ENCODE measurements at regions of chr4 and their contacts with region 1.

Region 1: DNA sequence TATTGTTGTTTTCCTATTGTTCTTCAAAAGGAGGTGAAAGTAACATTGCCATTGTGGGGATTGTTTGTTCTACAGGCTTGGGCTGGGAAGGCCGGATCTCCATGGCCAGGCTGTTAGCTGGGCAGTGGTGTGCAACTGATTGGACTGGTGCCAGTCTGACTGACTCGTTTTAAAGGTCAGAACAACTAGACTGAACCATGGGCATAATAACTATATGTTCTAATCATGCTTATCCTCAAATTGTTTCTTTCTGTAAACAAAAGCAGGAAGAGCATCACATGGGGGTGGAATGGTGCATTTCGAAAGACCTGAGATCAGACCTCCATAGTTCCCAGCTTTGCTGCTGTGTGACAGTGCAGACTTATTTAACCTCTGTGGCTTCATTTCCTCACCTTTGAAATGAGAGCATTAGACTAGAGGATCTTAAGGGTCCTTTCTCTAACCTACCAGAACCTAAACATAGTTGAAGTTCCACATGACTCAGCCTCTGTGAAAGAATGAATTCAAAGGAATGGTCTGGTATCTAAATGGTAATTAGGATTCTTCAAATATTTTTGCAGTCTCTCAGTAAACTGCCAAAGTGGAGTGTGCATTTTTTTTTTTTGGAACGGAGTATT is 66.7 kb upstream of the PGRMC2 start:
- DNase-seq: peak; percentile 62
- ATAC-seq: peak; percentile 3 to 36

Region 2: GRCh38 chr4:128287871-128288688 is 66.2 kb before region 1 on chr4:
- intact Hi-C with region 1: loop called in 1 of 2 experiments (anchors 10 kb)
- DNase-seq: peak; percentile 100
- ATAC-seq: peak; percentile 94 to 96

Region 3: DNA sequence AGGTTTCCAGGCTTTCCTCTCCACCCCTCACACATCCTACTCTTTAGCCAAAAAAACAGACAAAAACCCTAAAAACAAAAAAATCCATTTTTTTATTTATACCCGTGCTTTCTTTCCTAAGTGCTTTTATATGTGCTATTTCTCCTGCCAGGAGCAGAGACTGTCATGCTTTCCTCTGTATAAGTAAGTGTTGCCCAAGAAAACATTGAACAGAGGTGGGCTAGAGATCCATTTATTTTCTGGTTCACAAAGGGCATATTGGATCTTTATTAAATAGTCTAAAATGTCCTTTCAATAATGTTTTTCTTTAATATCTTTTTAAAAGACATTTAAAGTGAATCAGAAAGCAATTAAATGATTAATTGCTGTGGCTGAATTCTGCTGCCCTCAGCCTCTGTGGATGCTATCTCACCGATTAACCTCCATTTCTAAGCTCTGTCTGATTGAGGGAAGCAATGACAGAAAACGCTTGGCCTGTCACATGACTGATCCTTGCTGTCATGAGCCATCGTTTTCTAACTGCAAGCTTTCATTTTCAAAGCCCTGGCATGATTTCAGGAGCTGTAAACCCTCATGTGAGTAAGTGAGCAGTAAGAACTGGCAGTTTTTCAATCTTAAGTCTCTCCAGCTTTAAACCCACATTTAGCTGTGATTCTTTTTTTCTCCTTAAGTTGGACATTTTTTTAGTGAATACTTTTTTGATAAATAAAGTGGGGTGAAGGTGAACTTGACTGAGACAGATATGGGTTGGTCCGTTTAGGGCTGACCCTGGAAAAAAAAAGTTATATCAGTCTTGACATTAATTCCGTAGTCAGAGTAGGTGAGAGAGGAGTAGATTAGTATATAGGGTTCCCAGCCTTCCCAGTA is 114.0 kb after region 1 on chr4:
- intact Hi-C with region 1: no loop called
- DNase-seq: peak; percentile 37
- ATAC-seq: peak; percentile 87 to 95